BJ (cell line): ENCODE measurements at regions of chr11 and their contacts with region 1.

Region 1: GRCh38 chr11:65439331-65440181 is 17.0 kb downstream of the NEAT1 start:
- DNase-seq: no peak
- H3K4me3 ChIP-seq: no peak overlapping the region
- H3K27me3 ChIP-seq: no peaks in the 10 kb centered on the region
- CTCF ChIP-seq: no peak

Region 2: GRCh38 chr11:65471410-65471762 is 31.8 kb after region 1 on chr11:
- CTCF ChIA-PET with region 1: interaction called, 3 read pairs
- POLR2A ChIA-PET with region 1: interaction called, 11 read pairs
- DNase-seq: no peak
- H3K4me3 ChIP-seq: peak overlapping the region; percentile 15
- H3K27me3 ChIP-seq: no peaks in the 10 kb centered on the region
- CTCF ChIP-seq: peak; percentile 58

Region 3: GRCh38 chr11:65615229-65615941 is 175.8 kb after region 1 on chr11 and contains the start of gene PCNX3:
- CTCF ChIA-PET with region 1: no interaction called
- POLR2A ChIA-PET with region 1: interaction called, 12 read pairs
- DNase-seq: peak; percentile 100
- H3K4me3 ChIP-seq: peak within 1 kb of the TSS; percentile 76
- H3K27me3 ChIP-seq: no peaks in the 10 kb centered on the region
- CTCF ChIP-seq: no peak
- polyA plus RNA-seq, gene PCNX3: 9.8 and 19.7 TPM in 2 replicates